ENCODE measurements at regions of chr9 and their contacts with region 1.

Region 1: GRCh38 chr9:119968836-119969707 is 599.8 kb upstream of the BRINP1 start:
- DNase-seq: peak; percentile 65 to 74
- H3K4me3 ChIP-seq: no peak overlapping the region
- H3K4me3 Mint-ChIP-seq: no peak overlapping the region
- H3K27ac Mint-ChIP-seq: no peak overlapping the region
- H3K4me1 ChIP-seq: no peaks in the 10 kb centered on the region
- H3K4me1 Mint-ChIP-seq: no peaks in the 10 kb centered on the region
- H3K27me3 ChIP-seq: no peaks in the 10 kb centered on the region
- H3K27me3 Mint-ChIP-seq: peaks cover 3% of the 10 kb centered on the region
- CTCF ChIP-seq: peak; percentile 81 to 93

Region 2: GRCh38 chr9:119556129-119556875 is 412.8 kb before region 1 on chr9:
- CTCF ChIA-PET with region 1: no interaction called
- POLR2A ChIA-PET with region 1: no interaction called
- intact Hi-C with region 1: loop called (anchors 1 kb)
- DNase-seq: peak; percentile 59 to 76
- H3K4me3 ChIP-seq: peak overlapping the region; percentile 23
- H3K4me3 Mint-ChIP-seq: peak overlapping the region; percentile 65
- H3K27ac Mint-ChIP-seq: no peak overlapping the region
- H3K4me1 ChIP-seq: no peaks in the 10 kb centered on the region
- H3K4me1 Mint-ChIP-seq: no peaks in the 10 kb centered on the region
- H3K27me3 ChIP-seq: no peaks in the 10 kb centered on the region
- H3K27me3 Mint-ChIP-seq: peaks cover 5% of the 10 kb centered on the region
- CTCF ChIP-seq: peak; percentile 86 to 92

Region 3: DNA sequence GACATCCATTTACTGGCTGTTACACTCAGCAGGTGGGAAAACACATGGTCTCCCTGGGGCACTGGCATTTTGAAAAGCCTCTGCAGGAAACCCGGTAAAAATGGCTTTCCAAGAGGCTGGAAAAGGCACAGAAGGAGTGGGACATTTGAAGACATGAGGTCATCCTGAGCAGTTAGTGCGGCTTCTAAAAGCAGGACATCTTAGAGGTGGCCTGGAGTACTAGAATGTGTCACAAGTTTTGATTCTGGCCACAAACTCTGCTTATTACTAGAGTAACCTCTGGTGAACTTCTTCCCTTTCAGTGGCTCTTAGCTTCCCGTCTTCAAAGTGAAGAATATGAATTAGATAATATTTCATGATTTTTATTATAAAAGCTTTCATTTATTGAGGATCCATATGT is 176.8 kb before region 1 on chr9:
- CTCF ChIA-PET with region 1: no interaction called
- POLR2A ChIA-PET with region 1: no interaction called
- intact Hi-C with region 1: loop called (anchors 10 kb)
- DNase-seq: no peak
- H3K4me3 ChIP-seq: no peak overlapping the region
- H3K4me3 Mint-ChIP-seq: no peak overlapping the region
- H3K27ac Mint-ChIP-seq: no peak overlapping the region
- H3K4me1 ChIP-seq: no peaks in the 10 kb centered on the region
- H3K4me1 Mint-ChIP-seq: no peaks in the 10 kb centered on the region
- H3K27me3 ChIP-seq: no peaks in the 10 kb centered on the region
- H3K27me3 Mint-ChIP-seq: no peaks in the 10 kb centered on the region
- CTCF ChIP-seq: no peak

Region 4: GRCh38 chr9:119938871-119939270 is 30.2 kb before region 1 on chr9:
- CTCF ChIA-PET with region 1: no interaction called
- POLR2A ChIA-PET with region 1: no interaction called
- intact Hi-C with region 1: no loop called
- DNase-seq: no peak
- H3K4me3 ChIP-seq: no peak overlapping the region
- H3K4me3 Mint-ChIP-seq: no peak overlapping the region
- H3K27ac Mint-ChIP-seq: no peak overlapping the region
- H3K4me1 ChIP-seq: no peaks in the 10 kb centered on the region
- H3K4me1 Mint-ChIP-seq: no peaks in the 10 kb centered on the region
- H3K27me3 ChIP-seq: no peaks in the 10 kb centered on the region
- H3K27me3 Mint-ChIP-seq: no peaks in the 10 kb centered on the region
- CTCF ChIP-seq: no peak

Region 5: DNA sequence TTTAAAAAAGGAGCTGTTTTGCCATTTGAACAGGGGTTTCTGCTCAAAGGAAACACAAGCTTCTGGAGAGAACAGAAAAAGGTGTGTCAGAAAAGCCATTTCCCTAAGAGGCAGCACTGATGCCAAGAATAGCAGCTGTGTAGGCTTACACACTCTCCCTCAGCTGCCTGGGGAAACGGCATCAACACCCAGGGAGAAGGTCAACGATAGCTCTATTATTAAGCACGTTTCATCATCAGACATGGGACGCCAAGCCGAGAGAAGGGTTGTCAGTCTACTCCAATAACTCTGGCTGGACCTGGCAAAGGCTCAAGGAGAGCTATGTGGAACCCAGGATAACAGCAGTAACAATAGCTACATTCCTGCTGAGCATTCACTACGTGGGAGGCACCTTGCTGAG is 296.7 kb after region 1 on chr9:
- CTCF ChIA-PET with region 1: no interaction called
- POLR2A ChIA-PET with region 1: no interaction called
- intact Hi-C with region 1: no loop called
- DNase-seq: no peak
- H3K4me3 ChIP-seq: no peak overlapping the region
- H3K4me3 Mint-ChIP-seq: no peak overlapping the region
- H3K27ac Mint-ChIP-seq: no peak overlapping the region
- H3K4me1 ChIP-seq: no peaks in the 10 kb centered on the region
- H3K4me1 Mint-ChIP-seq: no peaks in the 10 kb centered on the region
- H3K27me3 ChIP-seq: no peaks in the 10 kb centered on the region
- H3K27me3 Mint-ChIP-seq: peaks cover 10% of the 10 kb centered on the region
- CTCF ChIP-seq: no peak

Measured in Caco-2 (cell line).